Activated B cell treated with CpG ODN at 0.5 μM for 24 hours (primary cell): ENCODE measurements at regions of chr18 and their contacts with region 1.

Region 1: GRCh38 chr18:58231930-58232329 is 187.9 kb downstream of the NEDD4L start:
- DNase-seq: no peak
- ATAC-seq: peak; percentile 47
- H3K4me3 Mint-ChIP-seq: no peak overlapping the region
- H3K27ac Mint-ChIP-seq: no peak overlapping the region
- H3K4me1 Mint-ChIP-seq: peaks cover 24% of the 10 kb centered on the region
- H3K27me3 Mint-ChIP-seq: no peaks in the 10 kb centered on the region
- CTCF ChIP-seq: no peak

Region 2: DNA sequence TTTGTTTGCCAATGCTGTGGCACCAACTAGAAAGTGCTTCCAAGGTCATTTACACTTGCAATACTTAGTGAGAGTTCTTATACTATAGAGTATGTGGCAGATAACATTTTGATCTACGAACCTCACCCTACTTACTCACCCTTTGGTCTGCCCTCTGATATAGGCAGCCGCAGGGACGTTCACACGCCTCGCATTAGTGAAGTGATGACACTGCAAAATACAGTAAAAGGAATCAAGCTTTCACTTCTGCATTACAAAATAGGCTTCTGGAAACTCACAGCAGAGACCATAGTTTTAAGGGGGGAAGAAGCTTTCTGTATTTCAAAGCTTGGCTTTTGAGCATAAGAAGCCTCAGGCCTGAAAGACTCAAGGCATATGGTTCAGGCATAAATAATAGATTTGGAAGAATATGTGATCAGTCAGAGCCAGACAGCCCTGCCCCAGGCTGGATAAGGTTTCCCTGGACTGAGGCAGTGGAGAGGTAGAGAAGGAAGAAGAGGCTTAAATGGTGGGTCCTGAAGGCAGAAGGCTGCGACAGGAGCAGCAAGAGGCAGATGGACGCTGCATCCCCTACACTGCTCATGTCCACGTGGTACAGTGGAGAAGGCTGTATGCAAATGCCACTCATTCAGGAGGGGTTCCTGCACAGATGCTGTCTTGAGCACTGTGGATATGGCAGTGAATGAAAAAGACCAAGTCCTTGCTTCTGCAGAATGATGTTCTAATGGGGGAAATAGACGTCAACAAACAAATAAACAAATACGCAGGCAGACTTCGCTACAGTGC is 708.6 kb before region 1 on chr18:
- CTCF ChIA-PET with region 1: no interaction called
- POLR2A ChIA-PET with region 1: no interaction called
- intact Hi-C with region 1: no loop called
- DNase-seq: no peak
- ATAC-seq: no peak
- H3K4me3 Mint-ChIP-seq: no peak overlapping the region
- H3K27ac Mint-ChIP-seq: no peak overlapping the region
- H3K4me1 Mint-ChIP-seq: peaks cover 7% of the 10 kb centered on the region
- H3K27me3 Mint-ChIP-seq: peaks cover 11% of the 10 kb centered on the region
- CTCF ChIP-seq: no peak

Region 3: GRCh38 chr18:57687970-57688369 is 544.0 kb before region 1 on chr18:
- CTCF ChIA-PET with region 1: no interaction called
- POLR2A ChIA-PET with region 1: interaction called, 10 read pairs
- intact Hi-C with region 1: no loop called
- DNase-seq: no peak
- ATAC-seq: no peak
- H3K4me3 Mint-ChIP-seq: no peak overlapping the region
- H3K27ac Mint-ChIP-seq: no peak overlapping the region
- H3K4me1 Mint-ChIP-seq: peaks cover 62% of the 10 kb centered on the region
- H3K27me3 Mint-ChIP-seq: no peaks in the 10 kb centered on the region
- CTCF ChIP-seq: no peak

Region 4: DNA sequence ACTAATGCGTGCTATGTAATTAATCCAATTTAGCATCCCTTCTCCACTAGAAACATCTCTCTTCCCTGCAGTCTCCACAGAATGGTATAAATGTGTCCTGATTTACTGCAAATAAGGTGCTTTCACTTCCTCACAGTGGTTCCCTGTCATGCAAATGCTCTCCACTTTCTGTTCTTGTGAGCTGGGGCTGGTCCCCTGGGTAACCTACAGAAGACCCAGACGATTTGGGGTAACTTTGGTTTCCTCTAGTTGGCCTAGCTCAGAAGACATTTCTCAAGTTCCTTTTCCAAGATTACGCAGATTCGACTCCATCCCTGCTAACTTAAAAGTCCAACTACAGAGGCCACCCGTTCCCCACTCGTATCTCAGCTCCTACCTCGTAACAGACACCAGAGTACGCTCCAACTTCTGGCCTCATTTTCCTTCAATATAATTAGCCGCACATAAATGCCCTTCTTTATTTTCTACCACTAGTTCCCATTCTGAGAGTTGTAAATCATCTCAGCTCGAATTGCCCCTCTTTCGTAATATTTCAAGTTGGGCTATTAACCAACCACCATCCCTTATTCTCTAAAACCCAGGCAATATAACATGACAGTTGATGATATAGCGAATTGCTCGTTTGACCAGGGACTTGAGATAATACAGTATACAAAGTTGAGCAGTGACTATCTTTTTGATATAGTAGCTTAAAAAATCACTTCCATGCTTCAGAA is 216.7 kb before region 1 on chr18:
- CTCF ChIA-PET with region 1: no interaction called
- POLR2A ChIA-PET with region 1: interaction called, 13 read pairs
- intact Hi-C with region 1: no loop called
- DNase-seq: peak; percentile 35
- ATAC-seq: peak; percentile 98
- H3K4me3 Mint-ChIP-seq: peak overlapping the region; percentile 55
- H3K27ac Mint-ChIP-seq: peak overlapping the region; percentile 78
- H3K4me1 Mint-ChIP-seq: peaks cover 32% of the 10 kb centered on the region
- H3K27me3 Mint-ChIP-seq: no peaks in the 10 kb centered on the region
- CTCF ChIP-seq: no peak

Region 5: GRCh38 chr18:58025733-58026132 is 206.2 kb before region 1 on chr18:
- CTCF ChIA-PET with region 1: no interaction called
- POLR2A ChIA-PET with region 1: no interaction called
- intact Hi-C with region 1: no loop called
- DNase-seq: no peak
- ATAC-seq: no peak
- H3K4me3 Mint-ChIP-seq: no peak overlapping the region
- H3K27ac Mint-ChIP-seq: no peak overlapping the region
- H3K4me1 Mint-ChIP-seq: no peaks in the 10 kb centered on the region
- H3K27me3 Mint-ChIP-seq: peaks cover 6% of the 10 kb centered on the region
- CTCF ChIP-seq: no peak

Region 6: DNA sequence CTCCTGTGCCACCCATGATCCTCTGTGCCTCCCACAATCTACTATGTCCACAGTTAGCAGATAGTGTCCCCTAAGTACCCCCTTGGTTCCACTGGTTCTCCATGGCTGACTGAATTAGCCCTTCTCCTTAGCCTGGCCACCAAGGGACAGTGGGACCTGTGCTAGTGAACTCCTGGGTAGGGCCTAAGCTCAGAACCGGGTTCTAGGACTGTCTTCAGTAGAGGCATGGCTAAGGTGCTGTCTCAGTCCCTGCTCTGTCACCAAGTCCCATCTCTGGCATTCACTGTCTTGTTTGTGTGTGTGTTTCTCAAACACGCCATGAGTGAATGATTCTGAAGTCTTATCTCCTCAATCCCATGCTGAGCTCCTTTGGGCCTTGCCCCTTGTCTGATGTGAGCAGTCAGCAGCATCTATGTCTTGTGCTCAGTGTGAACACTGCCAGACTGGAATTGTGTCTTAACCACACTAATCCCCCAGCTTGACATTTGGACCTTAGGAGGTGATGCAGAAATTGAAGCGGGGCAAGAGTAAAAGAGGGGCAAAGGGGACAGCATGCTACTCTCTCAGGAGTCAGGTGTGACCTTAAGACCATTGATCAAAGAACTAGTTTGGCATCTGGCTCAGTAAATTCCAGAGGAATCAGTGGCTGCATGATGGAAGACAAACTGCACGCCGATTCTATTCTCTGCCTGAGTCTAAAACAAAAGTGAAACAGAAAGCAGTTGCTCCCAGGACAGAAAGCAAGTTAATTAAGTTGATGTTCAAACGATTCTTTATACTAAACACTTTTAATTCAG is 206.4 kb after region 1 on chr18:
- CTCF ChIA-PET with region 1: no interaction called
- POLR2A ChIA-PET with region 1: no interaction called
- intact Hi-C with region 1: no loop called
- DNase-seq: no peak
- ATAC-seq: no peak
- H3K4me3 Mint-ChIP-seq: peak overlapping the region; percentile 79
- H3K27ac Mint-ChIP-seq: peak overlapping the region; percentile 32
- H3K4me1 Mint-ChIP-seq: peaks cover 11% of the 10 kb centered on the region
- H3K27me3 Mint-ChIP-seq: no peaks in the 10 kb centered on the region
- CTCF ChIP-seq: no peak